PC-3 (cell line): ENCODE measurements at regions of chrX and their contacts with region 1.

Region 1: GRCh38 chrX:19904778-19905367 is 17.5 kb upstream of the SH3KBP1 start:
- DNase-seq: peak; percentile 84
- ATAC-seq: peak; percentile 80
- H3K4me3 ChIP-seq: no peak overlapping the region
- H3K27ac ChIP-seq: no peak overlapping the region
- H3K4me1 ChIP-seq: peaks cover 4% of the 10 kb centered on the region
- H3K27me3 ChIP-seq: no peaks in the 10 kb centered on the region
- CTCF ChIP-seq: peak; percentile 85

Region 2: DNA sequence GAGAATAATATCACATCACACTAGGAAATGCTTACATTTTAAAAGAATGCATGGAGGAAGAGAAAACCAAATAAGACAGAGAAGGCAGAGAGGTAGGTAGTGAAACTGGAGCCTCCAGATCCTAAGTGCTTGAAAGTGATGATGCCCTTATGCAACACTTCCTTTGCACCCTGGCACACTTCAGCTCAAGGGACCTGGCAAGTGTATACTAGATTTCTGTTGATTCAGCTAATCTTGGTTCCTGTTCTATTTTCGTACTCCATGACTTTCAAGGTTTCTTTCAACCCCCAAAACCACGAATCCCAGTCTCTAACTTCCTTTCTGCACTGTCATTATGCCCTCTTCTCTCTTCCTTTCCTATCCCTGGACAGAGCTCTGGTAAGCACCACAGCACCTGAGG is 19.4 kb after region 1 on chrX:
- CTCF ChIA-PET with region 1: no interaction called
- POLR2A ChIA-PET with region 1: no interaction called
- intact Hi-C with region 1: no loop called
- DNase-seq: no peak
- ATAC-seq: no peak
- H3K4me3 ChIP-seq: no peak overlapping the region
- H3K27ac ChIP-seq: no peak overlapping the region
- H3K4me1 ChIP-seq: no peaks in the 10 kb centered on the region
- H3K27me3 ChIP-seq: no peaks in the 10 kb centered on the region
- CTCF ChIP-seq: no peak

Region 3: GRCh38 chrX:19990556-19991349 is 85.9 kb after region 1 on chrX and contains the start of gene BCLAF3:
- CTCF ChIA-PET with region 1: interaction called, 3 read pairs
- POLR2A ChIA-PET with region 1: no interaction called
- intact Hi-C with region 1: loop called (anchors 1 kb)
- DNase-seq: peak; percentile 94
- ATAC-seq: peak; percentile 98
- H3K4me3 ChIP-seq: peak within 1 kb of the TSS; percentile 79
- H3K27ac ChIP-seq: no peak within 1 kb of the TSS
- H3K4me1 ChIP-seq: no peaks in the 10 kb centered on the region
- H3K27me3 ChIP-seq: no peaks in the 10 kb centered on the region
- CTCF ChIP-seq: peak; percentile 75
- total RNA-seq, gene BCLAF3: 5.4 and 6.9 TPM in 2 replicates

Region 4: DNA sequence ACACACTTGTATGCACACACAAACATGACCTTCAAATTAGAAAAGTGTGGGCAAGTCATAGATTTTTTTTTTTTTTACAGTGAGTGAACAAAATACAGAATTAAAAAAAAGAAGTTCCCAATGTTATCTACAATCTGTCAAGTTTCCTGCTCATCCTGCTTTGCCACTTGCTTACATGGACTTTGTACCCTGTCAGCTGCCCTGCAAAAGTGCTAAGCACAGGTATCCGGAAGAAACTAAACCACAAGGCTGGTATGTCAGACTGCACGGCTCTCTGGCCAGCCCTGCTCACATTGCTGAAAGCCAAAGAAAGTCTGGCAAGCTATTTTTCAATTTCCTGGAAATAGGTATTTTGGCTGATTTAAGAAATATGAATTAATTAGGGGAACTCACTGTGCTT is 124.9 kb after region 1 on chrX:
- CTCF ChIA-PET with region 1: interaction called, 13 read pairs
- POLR2A ChIA-PET with region 1: no interaction called
- intact Hi-C with region 1: no loop called
- DNase-seq: peak; percentile 88
- ATAC-seq: peak; percentile 94
- H3K4me3 ChIP-seq: peak overlapping the region; percentile 22; the same call in 1 of the 2 replicates
- H3K27ac ChIP-seq: peak overlapping the region; percentile 64
- H3K4me1 ChIP-seq: peaks cover 31% of the 10 kb centered on the region
- H3K27me3 ChIP-seq: no peaks in the 10 kb centered on the region
- CTCF ChIP-seq: no peak

Region 5: DNA sequence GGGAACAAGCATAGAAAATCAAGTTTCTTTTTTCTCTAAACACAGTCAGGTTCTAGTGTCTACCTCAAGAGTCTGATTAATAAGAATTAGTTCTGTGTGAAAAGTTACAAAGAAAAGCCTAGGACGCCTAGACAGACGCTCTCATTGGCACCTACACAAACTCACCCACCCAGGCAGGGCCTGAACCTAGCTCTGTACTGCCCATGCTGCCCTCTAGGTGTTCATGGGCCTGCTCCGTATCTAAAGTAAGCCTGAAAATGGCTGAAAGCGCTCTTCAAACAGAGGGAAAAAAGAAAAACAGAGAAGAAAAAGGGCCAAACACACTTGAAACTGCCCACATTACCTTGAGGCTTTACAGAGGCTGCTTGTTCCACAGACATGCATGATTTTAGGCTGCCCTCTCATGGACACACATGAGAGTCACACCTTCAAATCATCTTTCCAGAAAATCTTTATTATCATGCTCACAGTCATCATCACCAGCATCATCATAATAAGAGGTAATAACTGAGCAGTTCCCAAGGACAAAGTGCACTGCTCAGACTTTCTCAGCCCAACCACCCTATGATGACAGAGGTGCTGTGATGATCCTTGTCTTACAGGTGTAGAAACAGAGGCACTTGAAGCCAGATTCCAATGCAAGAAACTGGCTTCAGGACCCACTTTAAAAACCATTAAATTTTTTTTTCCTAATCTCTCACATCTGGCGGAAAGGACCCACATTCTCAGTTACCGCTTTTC is 162.3 kb after region 1 on chrX:
- CTCF ChIA-PET with region 1: interaction called, 26 read pairs
- POLR2A ChIA-PET with region 1: interaction called, 8 read pairs
- intact Hi-C with region 1: loop called (anchors 1 kb)
- DNase-seq: peak; percentile 73
- ATAC-seq: peak; percentile 77
- H3K4me3 ChIP-seq: peak overlapping the region; percentile 33; the same call in 1 of the 2 replicates
- H3K27ac ChIP-seq: no peak overlapping the region
- H3K4me1 ChIP-seq: peaks cover 13% of the 10 kb centered on the region
- H3K27me3 ChIP-seq: no peaks in the 10 kb centered on the region
- CTCF ChIP-seq: peak; percentile 85

Region 6: DNA sequence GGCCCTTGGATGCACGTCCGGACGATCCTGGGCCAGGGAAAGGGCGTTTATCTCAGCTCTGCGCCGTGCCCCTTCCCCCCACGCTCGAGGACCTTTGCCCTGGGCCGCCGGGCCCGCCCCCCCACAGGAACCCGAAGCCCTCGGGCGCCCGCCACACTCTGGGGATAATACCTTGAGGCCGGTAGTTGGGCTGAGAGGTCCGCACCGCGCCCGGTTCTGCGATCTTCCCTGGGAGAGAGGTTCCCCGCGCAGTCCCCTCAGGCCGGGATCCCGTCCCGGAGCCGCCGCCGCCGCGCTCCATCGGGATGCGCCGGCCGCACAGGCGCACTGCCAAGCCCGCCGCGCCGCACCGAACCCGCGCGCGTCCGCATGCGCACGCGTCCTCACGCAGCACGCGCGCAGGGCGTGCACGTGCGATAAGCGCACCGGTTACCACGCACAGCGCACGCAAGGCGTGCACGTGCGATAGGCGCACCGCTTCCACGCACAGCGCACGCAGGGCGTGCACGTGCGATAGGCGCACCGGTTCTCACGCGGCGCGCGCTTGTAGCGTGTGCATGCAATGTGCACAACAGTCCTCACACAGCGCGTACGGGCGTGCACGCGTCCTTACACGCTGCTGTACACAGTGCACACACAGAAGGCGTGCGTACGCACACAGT is 211.8 kb after region 1 on chrX and contains the start of gene MAP7D2:
- CTCF ChIA-PET with region 1: no interaction called
- POLR2A ChIA-PET with region 1: interaction called, 3 read pairs
- intact Hi-C with region 1: loop called (anchors 5 kb)
- DNase-seq: no peak
- ATAC-seq: no peak
- H3K4me3 ChIP-seq: no peak within 1 kb of the TSS
- H3K27ac ChIP-seq: peak within 1 kb of the TSS; percentile 78
- H3K4me1 ChIP-seq: peaks cover 19% of the 10 kb centered on the region
- H3K27me3 ChIP-seq: no peaks in the 10 kb centered on the region
- CTCF ChIP-seq: no peak
- total RNA-seq, gene MAP7D2: 0.91 and 1.0 TPM in 2 replicates